KBM-7 (cell line): ENCODE measurements at regions of chr14 and their contacts with region 1.

Region 1: GRCh38 chr14:56491299-56492285 is 88.0 kb upstream of the TMEM260 start:
- DNase-seq: peak; percentile 71

Region 2: DNA sequence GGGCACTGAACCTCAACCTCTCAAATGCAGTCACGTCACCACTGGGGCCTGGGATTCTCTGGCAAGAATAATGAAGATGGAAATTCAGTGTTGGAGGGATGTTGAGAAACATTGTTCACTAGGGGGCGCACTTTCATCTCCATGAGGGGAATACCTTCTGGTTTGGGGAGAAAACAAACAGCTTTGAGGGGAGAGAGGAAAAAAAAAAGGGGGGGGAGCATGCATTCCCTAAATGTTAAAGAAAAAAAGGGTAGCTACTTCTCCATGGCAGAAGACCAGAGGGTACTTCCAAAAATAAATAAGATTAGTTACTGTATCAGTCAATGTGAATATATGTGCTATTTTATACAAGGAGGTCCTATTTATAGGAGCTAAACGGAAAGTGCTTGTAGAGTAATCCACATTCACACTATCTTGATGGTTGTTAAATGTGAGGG is 1045.4 kb before region 1 on chr14:
- in situ Hi-C with region 1: loop called (anchors 25 kb)
- DNase-seq: peak; percentile 89

Region 3: DNA sequence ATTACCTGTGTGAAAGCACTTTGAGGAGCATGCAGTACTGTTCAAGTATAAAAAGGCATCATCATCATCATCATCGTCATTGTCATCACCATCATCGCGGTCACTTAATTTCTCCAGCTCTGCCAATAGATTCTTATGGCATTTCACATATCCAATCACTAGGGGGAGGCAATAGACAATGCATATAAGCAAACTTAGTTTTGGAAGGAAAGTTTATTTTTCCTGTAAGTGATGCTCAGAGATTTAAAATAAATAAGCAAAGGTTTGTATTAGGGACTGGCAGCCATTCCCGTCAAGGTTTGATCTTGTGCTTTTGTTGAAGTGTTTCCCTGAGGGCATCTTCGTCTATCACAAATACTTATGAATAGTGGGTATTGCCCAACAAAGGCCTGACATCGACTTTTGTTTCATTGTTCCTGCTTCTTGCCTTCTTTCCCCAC is 784.2 kb before region 1 on chr14:
- in situ Hi-C with region 1: loop called (anchors 25 kb)
- DNase-seq: peak; percentile 27

Region 4: GRCh38 chr14:56821807-56822615 is 330.4 kb after region 1 on chr14:
- in situ Hi-C with region 1: no loop called
- DNase-seq: no peak